SK-N-SH (cell line): ENCODE measurements at regions of chr9 and their contacts with region 1.

Region 1: DNA sequence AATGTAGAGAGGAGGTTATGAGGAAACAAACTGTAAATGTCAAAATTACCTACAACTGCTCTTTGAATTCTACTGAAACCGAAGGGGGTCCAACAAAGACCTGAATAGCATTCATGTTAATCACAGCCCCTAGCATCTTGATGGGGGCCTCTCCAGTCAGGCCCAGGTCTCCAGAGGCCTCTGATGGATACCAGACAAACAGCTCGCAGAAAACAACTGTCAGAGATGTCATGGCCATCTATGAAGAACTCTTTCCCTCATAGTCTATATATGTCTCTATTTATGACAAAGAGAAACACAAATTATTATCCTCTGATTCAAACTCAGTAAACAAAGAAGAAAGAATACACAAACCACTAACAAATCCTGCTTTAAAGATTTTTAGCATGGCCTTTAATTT is 432.6 kb downstream of the CAAP1 start:
- DNase-seq: no peak
- H3K4me3 ChIP-seq: no peak overlapping the region
- H3K27ac ChIP-seq: no peak overlapping the region
- H3K4me1 ChIP-seq: peaks cover 0 to 2% of the 10 kb centered on the region in 2 experiments; a peak in 2 of 4 replicates
- H3K27me3 ChIP-seq: no peaks in the 10 kb centered on the region
- CTCF ChIP-seq: no peak
- EP300 ChIP-seq: no peak
- RAD21 ChIP-seq: no peak

Region 2: DNA sequence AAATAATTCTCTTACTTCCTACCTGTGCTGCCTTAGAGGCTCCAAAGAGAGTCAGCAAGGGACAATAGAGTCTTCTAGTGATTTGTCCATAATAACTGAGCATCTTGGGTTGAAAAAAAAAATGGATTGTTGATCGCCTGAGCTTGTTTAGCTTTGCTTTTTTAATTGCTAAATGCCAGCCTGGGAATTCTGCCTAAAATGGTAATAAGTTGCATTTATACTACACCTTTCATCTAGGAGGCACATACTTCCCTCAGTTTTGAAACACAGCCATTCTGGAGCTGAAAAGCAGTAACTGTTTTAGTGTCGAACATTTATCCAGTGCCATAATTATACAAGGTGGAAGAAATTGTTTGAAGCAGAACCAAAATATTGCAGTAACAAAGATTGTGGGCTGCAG is 11.3 kb after region 1 on chr9:
- CTCF ChIA-PET with region 1: interaction called, 10 read pairs
- POLR2A ChIA-PET with region 1: no interaction called
- DNase-seq: no peak
- H3K4me3 ChIP-seq: no peak overlapping the region
- H3K27ac ChIP-seq: no peak overlapping the region
- H3K4me1 ChIP-seq: no peaks in the 10 kb centered on the region
- H3K27me3 ChIP-seq: no peaks in the 10 kb centered on the region
- CTCF ChIP-seq: no peak
- EP300 ChIP-seq: no peak
- RAD21 ChIP-seq: no peak